ENCODE measurements at regions of chrX and their contacts with region 1.

Region 1: GRCh38 chrX:150486011-150486410 is 82.4 kb upstream of the MTM1 start:
- H3K4me3 Mint-ChIP-seq: no peak overlapping the region
- H3K27ac Mint-ChIP-seq: no peak overlapping the region
- H3K4me1 Mint-ChIP-seq: peaks cover 14% of the 10 kb centered on the region
- H3K27me3 Mint-ChIP-seq: peaks cover 5% of the 10 kb centered on the region

Region 2: GRCh38 chrX:149962859-149963757 is 522.9 kb before region 1 on chrX:
- intact Hi-C with region 1: loop called (anchors 5 kb)
- H3K4me3 Mint-ChIP-seq: no peak overlapping the region
- H3K27ac Mint-ChIP-seq: no peak overlapping the region
- H3K4me1 Mint-ChIP-seq: no peaks in the 10 kb centered on the region
- H3K27me3 Mint-ChIP-seq: no peaks in the 10 kb centered on the region

Region 3: GRCh38 chrX:150365051-150365989 is 120.7 kb before region 1 on chrX:
- intact Hi-C with region 1: loop called (anchors 10 kb)
- H3K4me3 Mint-ChIP-seq: peak overlapping the region; percentile 79
- H3K27ac Mint-ChIP-seq: peak overlapping the region; percentile 67
- H3K4me1 Mint-ChIP-seq: peaks cover 31% of the 10 kb centered on the region
- H3K27me3 Mint-ChIP-seq: peaks cover 57% of the 10 kb centered on the region

Region 4: GRCh38 chrX:150704030-150704613 is 218.1 kb after region 1 on chrX:
- intact Hi-C with region 1: no loop called
- H3K4me3 Mint-ChIP-seq: no peak overlapping the region
- H3K27ac Mint-ChIP-seq: peak overlapping the region; percentile 70
- H3K4me1 Mint-ChIP-seq: peaks cover 24% of the 10 kb centered on the region
- H3K27me3 Mint-ChIP-seq: no peaks in the 10 kb centered on the region

Measured in dendritic cell treated with granulocyte-macrophage colony-stimulating factor and Interleukin-4, amounts not matched to agents 40 ng/mL and 50 ng/mL, for 4 days (primary cell).